ENCODE measurements at regions of chr12 and their contacts with region 1.

Region 1: GRCh38 chr12:24561882-24562760 is 386.8 kb downstream of the BCAT1 start:
- DNase-seq: no peak
- H3K4me3 Mint-ChIP-seq: peak overlapping the region; percentile 82
- H3K27ac Mint-ChIP-seq: peak overlapping the region; percentile 56
- H3K4me1 Mint-ChIP-seq: peaks cover 22% of the 10 kb centered on the region
- H3K27me3 Mint-ChIP-seq: peaks cover 64% of the 10 kb centered on the region

Region 2: DNA sequence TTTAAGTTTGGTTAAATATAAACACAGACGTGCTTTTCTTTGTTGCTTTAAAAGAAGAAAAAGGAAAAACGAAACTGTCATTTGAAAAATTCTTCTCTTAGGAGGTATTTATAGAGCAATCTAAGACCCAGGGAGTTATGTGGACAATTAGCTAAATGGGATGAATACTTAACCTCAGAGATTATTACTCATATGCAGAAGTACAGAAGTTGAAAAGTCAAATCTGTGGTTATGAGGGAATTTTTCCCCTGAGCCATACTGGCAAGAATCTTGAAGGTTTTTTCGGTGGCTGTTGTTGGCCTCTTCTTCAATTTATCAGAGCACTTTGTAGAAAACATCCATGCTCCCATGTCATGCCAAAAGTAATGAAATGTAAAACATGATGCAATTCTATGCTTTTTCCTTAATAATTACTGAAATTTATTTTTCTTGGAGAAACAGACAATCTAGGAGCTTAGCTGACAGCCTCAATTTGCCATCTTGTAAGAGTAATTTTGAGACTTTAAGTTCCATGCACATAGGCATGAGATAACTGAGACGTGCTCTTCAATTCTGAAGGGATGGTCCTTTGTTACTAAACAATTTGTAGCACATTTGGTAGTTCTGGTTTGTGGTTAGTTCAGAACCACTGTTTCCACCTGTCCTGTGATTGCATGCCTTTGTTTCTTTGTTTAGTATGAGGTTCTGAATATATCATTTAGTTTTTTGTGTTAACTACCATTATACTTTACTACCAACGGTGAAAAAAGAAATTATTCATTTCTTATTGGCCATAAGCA is 260.2 kb after region 1 on chr12:
- intact Hi-C with region 1: loop called (anchors 2 kb)
- DNase-seq: no peak
- H3K4me3 Mint-ChIP-seq: peak overlapping the region; percentile 48
- H3K27ac Mint-ChIP-seq: peak overlapping the region; percentile 91
- H3K4me1 Mint-ChIP-seq: peaks cover 29% of the 10 kb centered on the region
- H3K27me3 Mint-ChIP-seq: no peaks in the 10 kb centered on the region

Region 3: DNA sequence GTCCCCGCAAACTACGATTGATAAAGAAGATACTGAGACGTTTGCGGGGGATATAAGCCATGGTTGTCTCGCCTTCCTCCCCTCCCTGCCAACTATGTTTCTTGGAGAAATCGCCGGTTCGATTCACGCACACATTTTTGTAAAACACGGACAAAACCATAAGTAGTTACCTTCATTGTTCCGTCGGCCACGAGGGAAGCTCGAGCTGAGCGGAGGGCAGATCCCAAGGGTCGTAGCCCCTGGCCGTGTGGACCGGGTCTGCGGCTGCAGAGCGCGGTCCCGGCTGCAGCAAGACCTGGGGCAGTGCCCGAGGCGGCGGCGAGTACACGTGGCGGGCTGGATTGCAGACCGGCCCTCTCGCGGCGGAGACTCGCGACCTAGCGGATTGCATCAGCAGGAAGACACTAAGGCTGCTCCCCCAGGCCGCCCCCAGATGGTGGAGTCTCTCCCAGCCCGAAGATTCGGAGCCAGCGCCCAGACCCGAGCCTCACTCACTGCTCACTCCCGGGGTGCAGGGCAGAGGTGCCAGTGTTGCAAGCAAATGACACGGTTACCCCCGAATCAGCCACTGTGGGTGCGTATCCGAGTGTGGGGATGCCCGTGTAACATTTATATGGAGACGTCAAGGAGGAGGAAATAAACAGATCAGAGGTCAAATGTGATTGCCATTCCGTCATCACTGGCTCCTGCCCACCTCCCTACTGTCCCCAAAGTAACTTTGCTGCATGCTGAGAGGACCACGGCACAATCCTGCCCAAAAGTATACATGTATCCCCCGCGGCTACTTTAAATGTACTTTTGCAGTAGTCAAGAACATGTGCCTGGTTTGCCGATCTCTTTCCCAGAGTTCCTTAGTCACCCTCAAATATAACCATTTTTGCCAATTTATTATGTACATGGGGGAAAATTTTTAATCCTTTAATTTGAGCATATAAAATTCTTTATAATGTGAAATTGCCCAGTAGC is 386.9 kb after region 1 on chr12 and contains the start of gene BCAT1:
- intact Hi-C with region 1: loop called (anchors 10 kb)
- DNase-seq: peak; percentile 33
- H3K4me3 Mint-ChIP-seq: peak within 1 kb of the TSS; percentile 92
- H3K27ac Mint-ChIP-seq: peak within 1 kb of the TSS; percentile 96
- H3K4me1 Mint-ChIP-seq: peaks cover 55% of the 10 kb centered on the region
- H3K27me3 Mint-ChIP-seq: peaks cover 3% of the 10 kb centered on the region
- total RNA-seq, gene BCAT1: 37.3 and 42.0 TPM in 2 replicates

Measured in activated T-helper 1 cell treated with anti-CD3 and anti-CD28 coated beads, Interleukin-12 subunit alpha, Interleukin-12 subunit beta, Interleukin-2, Interleukin-4 antibody, amounts not matched to agents 30 ng/mL and 10 ng/mL and 1 ng/mL, durations not matched to agents 14 hours and 24 hours and 36 hours (primary cell).